Prostate gland (tissue), 2 donors: ENCODE measurements at regions of chr3 and their contacts with region 1.

Region 1: DNA sequence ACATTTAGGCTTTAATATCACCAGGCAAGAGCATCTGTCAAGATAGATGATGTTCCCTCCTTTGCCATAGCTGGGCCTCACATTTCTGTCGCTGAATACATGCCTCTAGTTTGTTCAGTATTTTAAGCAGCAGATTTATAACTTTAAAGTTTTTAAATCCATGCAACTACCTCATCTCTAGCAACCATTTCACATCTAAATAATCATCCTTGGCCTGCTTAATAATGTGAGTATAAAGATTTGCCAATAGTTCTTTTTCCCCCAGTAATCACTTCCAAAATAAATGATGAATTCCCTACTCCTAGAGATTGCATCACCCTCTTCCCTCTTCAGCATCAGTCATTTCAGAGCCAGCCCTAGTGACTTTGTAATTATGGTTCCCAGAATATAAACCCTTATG is 36.2 kb upstream of the FILIP1L start:
- DNase-seq: no peak
- H3K4me3 ChIP-seq: no peak overlapping the region
- H3K27ac ChIP-seq: no peak overlapping the region
- H3K4me1 ChIP-seq: no peaks in the 10 kb centered on the region
- H3K27me3 ChIP-seq: no peaks in the 10 kb centered on the region
- CTCF ChIP-seq: no peak
- POLR2A ChIP-seq: no peak

Region 2: GRCh38 chr3:100113723-100114412 is 36.6 kb before region 1 on chr3:
- intact Hi-C with region 1: loop called (anchors 5 kb)
- DNase-seq: no peak
- H3K4me3 ChIP-seq: no peak overlapping the region
- H3K27ac ChIP-seq: no peak overlapping the region
- H3K4me1 ChIP-seq: no peaks in the 10 kb centered on the region
- H3K27me3 ChIP-seq: no peaks in the 10 kb centered on the region
- CTCF ChIP-seq: no peak
- POLR2A ChIP-seq: no peak

Region 3: GRCh38 chr3:100354850-100355249 is 204.4 kb after region 1 on chr3:
- intact Hi-C with region 1: no loop called
- DNase-seq: no peak
- H3K4me3 ChIP-seq: no peak overlapping the region
- H3K27ac ChIP-seq: no peak overlapping the region
- H3K4me1 ChIP-seq: no peaks in the 10 kb centered on the region
- H3K27me3 ChIP-seq: no peaks in the 10 kb centered on the region
- CTCF ChIP-seq: no peak
- POLR2A ChIP-seq: no peak